Ovary (tissue), 10 donors: ENCODE measurements at regions of chr3 and their contacts with region 1.

Region 1: DNA sequence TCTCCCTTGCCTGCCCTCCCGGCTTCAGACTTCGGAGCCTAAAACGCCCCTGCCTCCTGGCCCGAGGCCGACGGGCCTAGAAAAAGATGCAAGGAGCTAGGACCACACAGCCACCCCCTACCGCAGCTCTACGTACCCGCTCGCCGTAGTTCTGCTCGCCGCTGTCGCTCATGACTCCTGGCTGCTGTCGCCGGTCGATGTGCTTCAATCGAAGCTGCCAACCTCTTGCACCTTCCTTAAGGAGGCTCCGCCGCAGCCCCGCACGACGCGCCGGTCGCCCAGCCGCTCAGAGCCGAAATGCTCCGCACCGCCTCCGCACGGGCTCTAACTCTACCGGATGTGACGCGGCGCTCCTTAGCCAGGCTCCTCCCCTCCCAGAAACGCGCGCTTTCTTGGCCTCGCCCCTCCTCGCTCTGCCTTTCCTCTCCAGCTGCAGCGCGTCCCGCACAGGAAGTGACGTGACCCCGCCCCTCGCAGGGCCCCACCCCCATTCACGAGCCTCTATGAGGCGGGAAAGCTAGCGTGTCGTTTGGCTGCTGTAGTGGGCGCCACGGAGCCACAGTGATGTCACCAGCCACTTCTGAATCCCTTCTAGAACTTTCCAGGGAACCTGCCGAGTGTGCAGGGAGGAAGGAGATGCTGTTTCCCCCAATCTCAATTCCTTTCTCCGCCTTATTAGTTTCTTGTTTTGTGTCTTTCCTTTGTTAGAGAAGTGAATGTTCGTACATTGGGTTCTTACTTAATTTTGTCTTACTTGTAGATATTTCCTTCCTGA is at the start of gene TRA2B:
- DNase-seq: peak; percentile 99
- H3K4me3 ChIP-seq: peak within 1 kb of the TSS; percentile 95
- H3K27ac ChIP-seq: peak within 1 kb of the TSS; percentile 96
- H3K4me1 ChIP-seq: peaks cover 3% of the 10 kb centered on the region
- H3K27me3 ChIP-seq: no peaks in the 10 kb centered on the region
- CTCF ChIP-seq: peak in 2 of 3 donors; percentile 3 to 31
- EP300 ChIP-seq: peak; percentile 89
- POLR2A ChIP-seq: peak; percentile 100
- total RNA-seq, gene TRA2B: 108 to 158 (median 119) TPM

Region 2: DNA sequence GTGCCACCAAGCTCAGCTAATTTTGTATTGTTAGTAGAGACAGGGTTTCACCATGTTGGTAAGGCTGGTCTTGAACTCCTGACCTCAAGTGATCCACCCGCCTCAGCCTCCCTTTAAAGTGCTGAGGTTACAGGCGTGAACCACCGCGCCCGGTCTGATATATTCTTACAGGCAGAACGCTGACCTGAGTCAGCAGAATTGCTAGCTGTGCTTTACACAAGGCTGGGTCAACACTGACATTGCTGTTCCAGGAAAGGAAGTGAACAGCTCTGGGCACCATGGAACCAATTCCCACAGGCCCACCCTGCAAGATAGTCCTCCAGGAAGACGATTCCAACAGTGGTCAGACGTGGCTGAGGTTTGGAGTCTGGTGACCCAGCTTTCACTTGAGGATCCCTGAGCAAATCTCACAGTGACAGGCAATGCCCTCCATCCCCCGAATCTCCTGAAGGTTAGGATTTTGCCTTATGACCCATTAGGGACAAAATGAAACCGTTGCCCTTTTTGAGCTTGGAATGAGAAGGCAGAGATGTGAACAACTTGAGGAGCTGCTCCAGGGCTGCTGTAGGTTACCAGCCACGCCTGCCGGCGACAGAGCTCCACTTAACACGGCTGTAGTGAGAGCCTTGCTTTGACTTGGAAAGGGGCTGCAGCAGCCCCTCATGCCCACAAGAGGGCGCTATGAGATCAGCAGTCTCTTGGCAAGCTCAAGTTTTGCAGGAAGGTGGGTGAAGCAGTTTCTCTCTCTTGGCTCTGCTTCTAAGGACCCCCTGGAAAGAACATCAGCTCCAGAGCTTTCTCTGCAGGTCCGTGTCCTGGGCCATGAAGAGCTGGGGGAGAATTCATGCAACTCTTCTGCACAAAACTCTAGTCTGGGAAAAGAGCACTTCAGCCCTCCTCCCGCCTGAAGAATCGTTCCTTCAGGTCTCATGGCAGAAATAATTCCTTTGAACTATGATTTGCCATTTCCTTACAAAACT is 277.6 kb before region 1 on chr3:
- intact Hi-C with region 1: loop called in 2 of 4 experiments (anchors 5 to 10 kb)
- DNase-seq: peak; percentile 72 to 84 (median 80)
- H3K4me3 ChIP-seq: no peak overlapping the region
- H3K27ac ChIP-seq: no peak overlapping the region
- H3K4me1 ChIP-seq: peaks cover 13% of the 10 kb centered on the region
- H3K27me3 ChIP-seq: no peaks in the 10 kb centered on the region
- CTCF ChIP-seq: peak; percentile 84 to 96 (median 92)
- EP300 ChIP-seq: no peak
- POLR2A ChIP-seq: no peak

Region 3: GRCh38 chr3:185824476-185825378 is 113.1 kb before region 1 on chr3 and contains the start of gene IGF2BP2:
- intact Hi-C with region 1: loop called in 1 of 4 experiments (anchors 10 kb)
- DNase-seq: peak; percentile 47 to 76 (median 64)
- H3K4me3 ChIP-seq: peak within 1 kb of the TSS; percentile 56
- H3K27ac ChIP-seq: peak within 1 kb of the TSS; percentile 52 to 84
- H3K4me1 ChIP-seq: peaks cover 4% of the 10 kb centered on the region
- H3K27me3 ChIP-seq: no peaks in the 10 kb centered on the region
- CTCF ChIP-seq: no peak
- EP300 ChIP-seq: no peak
- POLR2A ChIP-seq: no peak
- total RNA-seq, gene IGF2BP2: 7.1 to 31.1 (median 16.6) TPM

Region 4: GRCh38 chr3:185852635-185853034 is 85.2 kb before region 1 on chr3:
- intact Hi-C with region 1: no loop called
- DNase-seq: no peak
- H3K4me3 ChIP-seq: no peak overlapping the region
- H3K27ac ChIP-seq: no peak overlapping the region
- H3K4me1 ChIP-seq: no peaks in the 10 kb centered on the region
- H3K27me3 ChIP-seq: no peaks in the 10 kb centered on the region
- CTCF ChIP-seq: no peak
- EP300 ChIP-seq: no peak
- POLR2A ChIP-seq: no peak

Region 5: GRCh38 chr3:186108941-186109865 is 171.3 kb after region 1 on chr3 and contains the start of gene ETV5:
- intact Hi-C with region 1: loop called in 1 of 4 experiments (anchors 2 kb)
- DNase-seq: peak; percentile 97 to 99 (median 98)
- H3K4me3 ChIP-seq: peak within 1 kb of the TSS; percentile 64
- H3K27ac ChIP-seq: peak within 1 kb of the TSS in 1 of 2 donors; percentile 50
- H3K4me1 ChIP-seq: peaks cover 7% of the 10 kb centered on the region
- H3K27me3 ChIP-seq: no peaks in the 10 kb centered on the region
- CTCF ChIP-seq: no peak
- EP300 ChIP-seq: no peak
- POLR2A ChIP-seq: peak; percentile 50
- total RNA-seq, gene ETV5: 3.3 to 20.4 (median 6.6) TPM

Region 6: GRCh38 chr3:186783073-186783730 is 845.3 kb after region 1 on chr3 and contains the start of gene EIF4A2:
- intact Hi-C with region 1: loop called in 2 of 4 experiments (anchors 5 to 10 kb)
- DNase-seq: peak; percentile 89 to 91 (median 90)
- H3K4me3 ChIP-seq: peak within 1 kb of the TSS; percentile 97
- H3K27ac ChIP-seq: peak within 1 kb of the TSS; percentile 91 to 97
- H3K4me1 ChIP-seq: peaks cover 14% of the 10 kb centered on the region
- H3K27me3 ChIP-seq: no peaks in the 10 kb centered on the region
- CTCF ChIP-seq: peak in 2 of 3 donors; percentile 18 to 23
- EP300 ChIP-seq: no peak
- POLR2A ChIP-seq: peak; percentile 89
- total RNA-seq, gene EIF4A2: 347 to 961 (median 629) TPM